Activated CD4-positive, alpha-beta T cell treated with anti-CD3 and anti-CD28 coated beads, Interleukin-2, amount 10 ng/mL, durations not matched to agents 7 days and 5 days (primary cell): ENCODE measurements at regions of chr16 and their contacts with region 1.

Region 1: GRCh38 chr16:70737377-70738082 is 51.7 kb upstream of the MTSS2 start:
- DNase-seq: peak; percentile 91
- H3K4me3 Mint-ChIP-seq: peak overlapping the region; percentile 75
- H3K27ac Mint-ChIP-seq: peak overlapping the region; percentile 100
- H3K4me1 Mint-ChIP-seq: peaks cover 79% of the 10 kb centered on the region
- H3K27me3 Mint-ChIP-seq: no peaks in the 10 kb centered on the region

Region 2: GRCh38 chr16:70540994-70541393 is 196.5 kb before region 1 on chr16:
- CTCF ChIA-PET with region 1: no interaction called
- POLR2A ChIA-PET with region 1: no interaction called
- DNase-seq: no peak
- H3K4me3 Mint-ChIP-seq: no peak overlapping the region
- H3K27ac Mint-ChIP-seq: no peak overlapping the region
- H3K4me1 Mint-ChIP-seq: peaks cover 9% of the 10 kb centered on the region
- H3K27me3 Mint-ChIP-seq: no peaks in the 10 kb centered on the region

Region 3: GRCh38 chr16:70750893-70751475 is 13.5 kb after region 1 on chr16:
- CTCF ChIA-PET with region 1: interaction called, 13 read pairs
- POLR2A ChIA-PET with region 1: no interaction called
- DNase-seq: no peak
- H3K4me3 Mint-ChIP-seq: no peak overlapping the region
- H3K27ac Mint-ChIP-seq: peak overlapping the region; percentile 85
- H3K4me1 Mint-ChIP-seq: peaks cover 59% of the 10 kb centered on the region
- H3K27me3 Mint-ChIP-seq: no peaks in the 10 kb centered on the region